CD8-positive, alpha-beta memory T cell (primary cell): ENCODE measurements at regions of chr7 and their contacts with region 1.

Region 1: DNA sequence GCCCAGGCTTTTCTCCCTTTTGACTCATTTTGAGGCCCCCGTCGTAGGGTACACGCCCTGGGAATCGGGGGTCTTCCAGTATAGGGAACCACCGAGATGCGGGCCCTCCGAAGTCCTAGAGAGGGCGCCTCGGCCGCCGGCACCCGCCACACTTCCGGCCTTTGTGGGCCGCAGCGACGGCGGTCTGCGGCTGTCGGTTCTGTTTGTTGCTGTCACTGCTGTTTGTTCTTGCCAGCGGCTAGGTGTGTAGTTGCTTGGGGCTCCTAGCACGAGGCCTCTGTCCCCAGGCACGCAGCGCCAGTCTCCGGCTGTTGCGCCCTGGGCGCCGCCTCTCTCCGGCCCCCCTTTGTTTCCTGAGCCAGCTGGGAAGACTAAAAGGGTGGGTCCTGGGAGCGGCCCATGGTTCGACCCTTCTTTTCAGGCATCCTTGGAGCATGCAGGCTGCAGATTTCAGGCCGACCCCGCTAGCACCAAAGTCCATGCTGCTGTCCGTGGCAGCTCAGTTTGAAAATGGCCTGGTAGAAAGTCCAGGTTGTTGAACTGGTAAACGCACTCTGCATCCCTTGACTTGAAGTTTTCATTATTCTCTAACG is 17.8 kb upstream of the ZKSCAN1 start:
- DNase-seq: peak; percentile 58 to 86 (median 79)
- H3K4me3 ChIP-seq: peak overlapping the region; percentile 12
- H3K4me3 Mint-ChIP-seq: peak overlapping the region; percentile 46 to 88 (median 77)
- H3K27ac ChIP-seq: peak overlapping the region; percentile 0
- H3K27ac Mint-ChIP-seq: peak overlapping the region; percentile 62 to 98 (median 93)
- H3K4me1 ChIP-seq: peaks cover 15% of the 10 kb centered on the region
- H3K4me1 Mint-ChIP-seq: peaks cover 12 to 15% (median 13%) of the 10 kb centered on the region in 3 donors
- H3K27me3 ChIP-seq: no peaks in the 10 kb centered on the region
- H3K27me3 Mint-ChIP-seq: peaks cover 3 to 9% of the 10 kb centered on the region in 2 donors

Region 2: GRCh38 chr7:99364961-99365817 is 632.5 kb before region 1 on chr7:
- CTCF ChIA-PET with region 1: no interaction called
- POLR2A ChIA-PET with region 1: interaction called, 11 read pairs
- DNase-seq: peak; percentile 49 to 75 (median 51)
- H3K4me3 ChIP-seq: no peak overlapping the region
- H3K4me3 Mint-ChIP-seq: peak overlapping the region in 1 of 7 donors; percentile 20
- H3K27ac ChIP-seq: no peak overlapping the region
- H3K27ac Mint-ChIP-seq: peak overlapping the region in 4 of 8 donors; percentile 50 to 74 (median 56)
- H3K4me1 ChIP-seq: no peaks in the 10 kb centered on the region
- H3K4me1 Mint-ChIP-seq: peaks cover 0 to 2% (median 0%) of the 10 kb centered on the region in 3 donors
- H3K27me3 ChIP-seq: no peaks in the 10 kb centered on the region
- H3K27me3 Mint-ChIP-seq: no peaks in the 10 kb centered on the region

Region 3: GRCh38 chr7:99918959-99919813 is 78.5 kb before region 1 on chr7 and contains the start of gene TRIM4:
- CTCF ChIA-PET with region 1: interaction called, 51 read pairs
- POLR2A ChIA-PET with region 1: interaction called, 18 read pairs
- DNase-seq: peak; percentile 78 to 92 (median 88)
- H3K4me3 ChIP-seq: peak within 1 kb of the TSS; percentile 97
- H3K4me3 Mint-ChIP-seq: peak within 1 kb of the TSS; percentile 92 to 98 (median 96)
- H3K27ac ChIP-seq: peak within 1 kb of the TSS; percentile 94
- H3K27ac Mint-ChIP-seq: peak within 1 kb of the TSS; percentile 93 to 99 (median 98)
- H3K4me1 ChIP-seq: peaks cover 48% of the 10 kb centered on the region
- H3K4me1 Mint-ChIP-seq: peaks cover 47 to 59% (median 57%) of the 10 kb centered on the region in 3 donors
- H3K27me3 ChIP-seq: no peaks in the 10 kb centered on the region
- H3K27me3 Mint-ChIP-seq: peaks cover 0 to 6% of the 10 kb centered on the region in 2 donors
- total RNA-seq, gene TRIM4: 30.0 to 31.0 TPM

Region 4: DNA sequence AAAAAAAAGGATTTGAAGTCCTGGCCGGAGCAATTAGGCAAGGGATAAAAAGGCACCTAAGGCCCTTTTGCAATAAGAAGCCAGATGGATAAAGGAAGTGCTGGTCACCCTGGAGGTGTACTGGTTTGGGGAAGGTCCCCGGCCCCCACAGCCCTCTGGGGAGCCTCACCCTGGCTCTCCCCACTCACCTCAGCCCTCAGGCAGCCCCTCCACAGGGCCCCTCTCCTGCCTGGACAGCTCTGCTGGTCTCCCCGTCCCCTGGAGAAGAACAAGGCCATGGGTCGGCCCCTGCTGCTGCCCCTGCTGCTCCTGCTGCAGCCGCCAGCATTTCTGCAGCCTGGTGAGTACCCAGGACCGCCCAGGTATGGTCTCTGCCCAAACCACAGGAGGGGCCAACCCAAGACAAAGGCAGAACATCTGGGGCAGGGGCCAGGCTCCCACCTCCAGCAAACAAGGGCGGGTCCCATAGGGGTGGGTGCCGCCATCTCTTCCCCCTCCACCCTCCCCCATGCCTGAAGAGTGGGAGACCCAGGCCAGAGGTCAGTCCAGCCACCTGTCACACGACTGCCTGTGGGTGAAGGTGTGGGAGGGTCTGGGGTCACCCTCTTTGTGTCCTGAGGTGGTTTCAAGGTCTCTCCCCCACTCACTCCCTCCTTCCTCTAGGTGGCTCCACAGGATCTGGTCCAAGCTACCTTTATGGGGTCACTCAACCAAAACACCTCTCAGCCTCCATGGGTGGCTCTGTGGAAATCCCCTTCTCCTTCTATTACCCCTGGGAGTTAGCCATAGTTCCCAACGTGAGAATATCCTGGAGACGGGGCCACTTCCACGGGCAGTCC is 360.6 kb after region 1 on chr7 and contains the start of gene PILRB:
- CTCF ChIA-PET with region 1: no interaction called
- POLR2A ChIA-PET with region 1: no interaction called
- DNase-seq: no peak
- H3K4me3 ChIP-seq: no peak within 1 kb of the TSS
- H3K4me3 Mint-ChIP-seq: no peak within 1 kb of the TSS
- H3K27ac ChIP-seq: no peak within 1 kb of the TSS
- H3K27ac Mint-ChIP-seq: peak within 1 kb of the TSS in 6 of 8 donors; percentile 17 to 93 (median 68)
- H3K4me1 ChIP-seq: peaks cover 15% of the 10 kb centered on the region
- H3K4me1 Mint-ChIP-seq: peaks cover 9 to 25% (median 17%) of the 10 kb centered on the region in 3 donors
- H3K27me3 ChIP-seq: no peaks in the 10 kb centered on the region
- H3K27me3 Mint-ChIP-seq: no peaks in the 10 kb centered on the region
- total RNA-seq, gene PILRB: 33.5 to 33.7 TPM

Region 5: DNA sequence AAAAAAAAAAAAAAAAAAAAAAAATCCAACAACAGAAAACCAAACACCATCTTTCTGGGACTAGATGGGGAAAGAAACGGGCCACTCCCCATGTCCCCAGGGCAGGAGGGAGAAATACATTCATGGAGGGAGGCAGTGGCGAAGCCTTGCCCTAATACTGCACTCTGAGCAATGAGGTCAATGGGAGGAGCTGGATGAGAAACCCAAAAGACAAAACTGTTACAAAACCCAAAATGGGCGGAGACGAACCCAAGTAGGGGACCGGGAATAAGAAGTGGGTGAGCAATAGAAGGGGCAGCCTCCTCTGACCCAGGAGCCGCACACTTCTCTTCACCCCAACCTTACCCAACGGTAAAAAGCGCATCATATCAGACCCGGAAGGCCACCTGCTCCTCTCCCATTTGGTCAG is 682.5 kb after region 1 on chr7:
- CTCF ChIA-PET with region 1: no interaction called
- POLR2A ChIA-PET with region 1: interaction called, 12 read pairs
- DNase-seq: no peak
- H3K4me3 ChIP-seq: no peak overlapping the region
- H3K4me3 Mint-ChIP-seq: peak overlapping the region in 1 of 7 donors; percentile 70
- H3K27ac ChIP-seq: no peak overlapping the region
- H3K27ac Mint-ChIP-seq: peak overlapping the region; percentile 8 to 94 (median 51)
- H3K4me1 ChIP-seq: peaks cover 24% of the 10 kb centered on the region
- H3K4me1 Mint-ChIP-seq: peaks cover 29 to 46% (median 33%) of the 10 kb centered on the region in 3 donors
- H3K27me3 ChIP-seq: no peaks in the 10 kb centered on the region
- H3K27me3 Mint-ChIP-seq: peaks cover 0 to 2% of the 10 kb centered on the region in 2 donors